Transverse colon (tissue), 4 donors: ENCODE measurements at regions of chr6 and their contacts with region 1.

Region 1: DNA sequence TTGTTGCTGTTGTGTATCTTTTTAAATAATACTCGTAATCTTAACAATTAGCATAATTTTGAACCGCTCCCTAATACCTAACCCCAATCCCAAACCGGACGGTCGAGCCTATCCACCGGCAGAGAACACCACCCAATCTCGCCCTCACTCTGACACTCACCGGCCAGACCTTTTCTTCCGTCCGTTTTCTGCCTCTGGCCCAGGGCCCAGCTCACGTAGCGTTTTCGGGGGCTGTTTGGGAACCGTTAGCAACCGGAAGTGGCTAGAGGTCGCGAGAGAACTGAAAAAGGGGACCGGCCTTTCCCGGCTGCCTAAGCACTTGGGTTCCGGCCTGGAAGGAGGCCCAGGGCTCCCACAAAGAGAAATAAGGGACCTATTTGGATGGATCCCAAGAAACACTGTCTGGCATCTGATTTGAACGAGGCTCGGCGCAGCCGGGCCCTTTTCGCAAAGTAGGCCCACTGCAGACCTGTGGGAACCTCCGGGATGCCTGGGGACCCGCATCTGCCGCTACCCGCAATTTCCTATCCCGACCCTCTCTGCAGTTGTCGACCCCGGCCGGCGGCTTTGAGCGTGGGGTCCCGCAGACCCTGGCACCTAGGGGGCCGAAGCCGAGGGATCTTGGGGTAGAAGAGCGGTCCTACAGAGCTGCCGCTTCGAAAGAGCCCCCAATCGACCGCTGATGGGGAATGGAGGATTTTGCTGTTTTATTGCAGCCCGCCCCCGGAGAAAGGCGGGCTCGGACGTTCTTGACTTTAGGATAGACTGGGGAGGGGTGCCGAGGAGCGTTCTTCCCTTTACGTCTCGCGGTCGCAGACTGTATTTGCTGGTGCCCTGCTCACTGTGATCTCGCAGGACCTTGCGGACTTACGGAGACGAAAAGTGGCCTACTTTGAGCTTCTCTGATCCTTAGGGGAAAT is 4.8 kb upstream of the ZKSCAN8 start:
- DNase-seq: peak; percentile 90
- H3K4me3 ChIP-seq: peak overlapping the region; percentile 52 to 73 (median 64)
- H3K27ac ChIP-seq: peak overlapping the region; percentile 87 to 95 (median 92)
- H3K4me1 ChIP-seq: peaks cover 5 to 45% (median 13%) of the 10 kb centered on the region in 4 donors
- H3K27me3 ChIP-seq: no peaks in the 10 kb centered on the region
- CTCF ChIP-seq: no peak
- EP300 ChIP-seq: no peak
- POLR2A ChIP-seq: peak; percentile 30

Region 2: DNA sequence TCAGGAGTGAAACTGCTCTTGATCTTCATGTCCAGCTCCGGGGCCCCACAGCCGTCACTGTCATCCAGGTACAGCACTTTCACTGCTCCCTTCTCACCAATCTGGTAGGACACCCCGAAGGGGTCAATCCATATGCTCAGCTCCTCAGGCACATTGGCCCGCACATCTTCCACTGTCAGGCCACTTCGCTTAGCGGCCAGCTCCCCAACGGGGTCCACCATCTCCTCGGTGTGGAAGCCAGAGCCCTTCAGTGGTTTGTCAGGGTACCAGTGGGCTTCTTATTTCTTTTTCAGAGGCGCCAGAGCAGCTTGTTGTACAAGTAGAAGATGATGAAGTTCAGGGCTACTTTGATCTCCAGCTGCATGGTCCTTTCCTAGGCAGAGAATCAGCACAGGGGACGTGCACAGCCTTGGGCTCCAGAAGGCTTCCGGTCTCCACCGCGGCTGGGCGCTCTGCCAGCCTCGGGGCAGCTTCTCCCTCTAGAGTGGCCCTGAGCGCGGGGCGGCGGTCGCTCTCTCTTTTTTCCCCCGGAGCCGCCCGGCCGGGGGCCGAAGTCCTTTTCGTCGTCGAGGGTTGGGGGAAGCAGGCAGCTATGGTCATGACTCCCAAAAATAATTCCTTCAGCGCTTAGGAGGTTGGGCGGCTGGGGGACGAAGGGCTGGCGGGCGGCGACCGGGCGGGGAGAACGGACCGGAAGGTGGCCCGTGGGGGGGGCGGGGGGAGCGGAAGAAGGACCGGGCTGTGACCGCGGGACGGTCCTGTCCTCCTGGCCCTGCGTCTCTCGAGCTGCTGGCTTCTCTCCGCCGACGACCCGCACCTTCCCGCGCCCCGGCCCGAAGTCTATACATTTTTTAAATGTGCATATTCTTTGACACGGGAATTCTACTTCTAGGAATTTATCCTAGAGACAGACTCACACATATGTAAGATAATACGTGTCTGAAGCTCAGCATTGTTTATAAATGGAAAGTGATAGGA is 81.7 kb after region 1 on chr6:
- in situ Hi-C with region 1: loop called in 1 of 4 experiments (anchors 10 kb)
- intact Hi-C with region 1: no loop called
- DNase-seq: peak; percentile 78
- H3K4me3 ChIP-seq: peak overlapping the region; percentile 25 to 66 (median 48)
- H3K27ac ChIP-seq: peak overlapping the region; percentile 45 to 80 (median 68)
- H3K4me1 ChIP-seq: peaks cover 0 to 15% (median 2%) of the 10 kb centered on the region in 4 donors
- H3K27me3 ChIP-seq: peaks cover 33% of the 10 kb centered on the region
- CTCF ChIP-seq: no peak
- EP300 ChIP-seq: no peak
- POLR2A ChIP-seq: peak; percentile 36

Region 3: GRCh38 chr6:28252009-28252975 is 115.4 kb after region 1 on chr6 and contains the start of gene ZKSCAN4:
- in situ Hi-C with region 1: no loop called
- intact Hi-C with region 1: loop called (anchors 10 kb)
- DNase-seq: peak; percentile 87
- H3K4me3 ChIP-seq: peak within 1 kb of the TSS; percentile 42 to 97 (median 83)
- H3K27ac ChIP-seq: peak within 1 kb of the TSS; percentile 60 to 80 (median 68)
- H3K4me1 ChIP-seq: peaks cover 11 to 17% (median 15%) of the 10 kb centered on the region in 4 donors
- H3K27me3 ChIP-seq: peaks cover 19% of the 10 kb centered on the region
- CTCF ChIP-seq: no peak
- EP300 ChIP-seq: no peak
- POLR2A ChIP-seq: no peak
- total RNA-seq, gene ZKSCAN4: 0.60 to 9.0 (median 4.9) TPM

Region 4: DNA sequence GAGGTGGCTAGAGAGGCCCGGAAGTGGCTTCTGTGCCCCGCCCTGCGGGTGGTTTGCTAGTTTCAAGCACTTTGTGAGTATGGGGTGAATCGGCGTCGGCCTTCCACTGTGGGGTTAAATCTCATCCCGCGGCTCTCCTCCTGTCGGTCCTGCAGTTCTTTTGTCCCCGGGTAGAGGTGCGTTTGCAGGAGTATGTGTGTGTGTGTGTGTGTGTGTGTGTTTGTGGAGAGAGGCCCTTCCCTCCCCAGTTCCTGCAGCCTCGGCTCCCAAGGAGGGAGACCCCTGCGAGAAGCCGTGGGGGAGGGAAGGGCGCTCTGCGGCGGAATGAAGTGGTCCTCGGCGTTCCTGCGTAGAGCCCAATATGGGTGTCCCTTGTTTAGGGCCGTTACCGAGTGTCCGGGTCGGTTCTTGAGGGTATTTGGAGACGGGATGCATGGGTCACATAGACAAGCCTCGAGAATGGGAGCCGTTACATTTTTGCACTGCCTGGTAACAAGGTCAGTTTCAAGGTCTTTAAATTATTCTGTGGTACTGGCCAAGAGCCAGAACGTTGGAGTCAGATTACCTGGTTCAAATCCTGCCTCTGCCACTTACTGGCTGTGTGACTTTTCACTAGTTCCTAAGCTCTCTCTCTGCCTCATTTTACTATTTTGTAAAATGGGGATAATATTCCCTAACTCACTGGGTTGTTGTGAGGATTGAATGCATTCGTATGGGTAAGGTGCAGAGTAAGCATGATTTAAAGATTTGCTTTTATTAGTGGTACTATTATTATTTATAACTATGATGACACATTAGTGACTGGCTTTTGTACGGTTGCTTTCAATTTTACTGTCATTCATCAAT is 213.3 kb after region 1 on chr6 and contains the start of gene ZKSCAN3:
- in situ Hi-C with region 1: loop called (anchors 5 to 25 kb)
- intact Hi-C with region 1: loop called (anchors 10 kb)
- DNase-seq: peak; percentile 91
- H3K4me3 ChIP-seq: peak within 1 kb of the TSS; percentile 66 to 93 (median 76)
- H3K27ac ChIP-seq: peak within 1 kb of the TSS; percentile 83 to 89 (median 84)
- H3K4me1 ChIP-seq: peaks cover 13 to 26% (median 19%) of the 10 kb centered on the region in 4 donors
- H3K27me3 ChIP-seq: peaks cover 4% of the 10 kb centered on the region
- CTCF ChIP-seq: no peak
- EP300 ChIP-seq: no peak
- POLR2A ChIP-seq: peak; percentile 62
- total RNA-seq, gene ZKSCAN3: 1.4 to 5.2 (median 4.3) TPM